Sciatic nerve (tissue), 2 donors: ENCODE measurements at regions of chr2 and their contacts with region 1.

Region 1: GRCh38 chr2:25131567-25132298 is 36.6 kb downstream of the POMC start:
- DNase-seq: peak; percentile 80
- ATAC-seq: peak; percentile 72

Region 2: GRCh38 chr2:24984912-24985311 is 146.8 kb before region 1 on chr2:
- intact Hi-C with region 1: loop called (anchors 5 kb)
- DNase-seq: peak; percentile 73
- ATAC-seq: peak; percentile 91

Region 3: DNA sequence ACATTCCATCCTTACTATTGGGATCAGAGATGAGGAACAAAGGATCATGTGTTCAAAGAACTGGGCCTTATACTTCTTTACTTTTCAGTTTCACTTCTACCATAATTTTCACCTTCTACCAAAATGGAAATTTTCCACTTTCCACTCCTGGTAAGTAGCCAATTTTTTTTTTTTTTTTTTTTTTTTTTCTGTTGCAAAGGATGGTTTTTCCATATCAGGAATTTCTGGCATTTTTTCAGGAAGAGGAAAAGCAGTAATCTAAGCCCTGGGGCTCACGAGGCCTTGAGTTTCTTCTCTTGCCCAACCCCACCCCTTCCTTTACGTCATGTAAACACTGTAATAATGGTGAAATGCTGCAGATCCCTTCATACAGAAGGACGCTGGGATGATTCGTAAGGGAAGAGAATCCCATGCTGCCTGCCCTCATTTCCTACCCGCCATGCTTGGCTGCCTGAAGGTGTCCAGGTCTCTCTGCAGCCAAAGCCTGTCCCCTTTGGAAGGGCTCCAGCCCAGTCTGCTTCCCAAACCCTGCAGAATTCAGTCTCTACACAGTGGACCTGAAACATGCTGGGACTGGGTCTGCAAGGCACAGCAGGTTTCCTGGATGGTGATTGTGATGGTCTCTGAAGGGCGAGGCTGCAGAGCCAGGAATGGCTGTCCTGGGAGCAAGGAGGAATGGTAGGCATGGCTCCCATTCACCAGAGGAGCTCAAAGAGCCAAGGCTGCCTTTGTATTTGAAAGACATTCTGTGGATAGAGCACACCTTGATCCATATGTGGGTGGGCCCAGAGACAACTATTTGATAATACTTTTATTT is 32.9 kb before region 1 on chr2:
- intact Hi-C with region 1: no loop called
- DNase-seq: no peak
- ATAC-seq: peak; percentile 92